Motor neuron (in vitro differentiated cells): ENCODE measurements at regions of chr10 and their contacts with region 1.

Region 1: DNA sequence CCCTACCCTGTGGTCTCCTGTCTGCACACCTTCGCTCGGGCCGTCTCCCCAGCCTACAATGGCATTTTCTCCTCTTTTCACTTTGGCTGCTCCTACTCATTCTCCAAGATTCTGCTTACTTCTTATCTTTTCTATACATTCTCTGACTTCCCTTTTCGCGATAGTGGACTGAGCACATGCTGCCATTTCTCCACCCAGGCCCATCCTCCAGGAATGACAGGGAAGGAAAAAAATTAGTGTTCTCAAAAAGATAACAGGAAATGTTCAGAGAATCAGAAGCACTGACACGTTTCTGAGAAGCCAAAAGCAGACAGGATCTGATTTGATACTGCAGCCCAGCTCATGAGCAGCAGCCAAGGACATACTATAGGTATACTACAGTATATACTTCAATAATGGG is 6.4 kb upstream of the ANXA11 start:
- ATAC-seq: no peak
- H3K4me3 ChIP-seq: no peak overlapping the region
- H3K27ac ChIP-seq: no peak overlapping the region
- H3K4me1 ChIP-seq: no peaks in the 10 kb centered on the region

Region 2: DNA sequence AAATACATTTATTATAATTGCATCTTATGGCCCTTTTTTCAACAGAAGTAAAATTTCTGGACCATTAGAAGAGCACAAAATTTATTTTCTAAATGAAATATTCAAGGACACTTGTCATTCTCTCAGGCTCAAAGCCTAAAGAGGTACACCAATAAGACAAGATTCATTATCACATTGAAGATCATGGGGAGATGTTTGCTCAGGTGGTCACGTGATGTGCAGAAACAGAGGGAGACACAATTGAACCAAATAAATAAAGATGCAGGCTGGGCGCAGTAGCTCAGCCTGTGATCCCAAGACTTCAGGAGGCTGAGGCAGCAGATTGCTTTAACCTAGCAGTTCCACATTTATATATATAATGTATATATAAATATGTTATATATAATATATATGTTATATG is 186.5 kb before region 1 on chr10:
- in situ Hi-C with region 1: no loop called
- ATAC-seq: no peak
- H3K4me3 ChIP-seq: no peak overlapping the region
- H3K27ac ChIP-seq: no peak overlapping the region
- H3K4me1 ChIP-seq: no peaks in the 10 kb centered on the region

Region 3: GRCh38 chr10:80144067-80144695 is 67.6 kb before region 1 on chr10:
- in situ Hi-C with region 1: loop called in 1 of 9 experiments (anchors 10 kb)
- ATAC-seq: peak in 7 of 8 experiments; percentile 6 to 49 (median 15)
- H3K4me3 ChIP-seq: no peak overlapping the region
- H3K27ac ChIP-seq: no peak overlapping the region
- H3K4me1 ChIP-seq: no peaks in the 10 kb centered on the region